Activated CD8-positive, alpha-beta T cell treated with anti-CD3 and anti-CD28 coated beads for 36 hours (primary cell): ENCODE measurements at regions of chr11 and their contacts with region 1.

Region 1: DNA sequence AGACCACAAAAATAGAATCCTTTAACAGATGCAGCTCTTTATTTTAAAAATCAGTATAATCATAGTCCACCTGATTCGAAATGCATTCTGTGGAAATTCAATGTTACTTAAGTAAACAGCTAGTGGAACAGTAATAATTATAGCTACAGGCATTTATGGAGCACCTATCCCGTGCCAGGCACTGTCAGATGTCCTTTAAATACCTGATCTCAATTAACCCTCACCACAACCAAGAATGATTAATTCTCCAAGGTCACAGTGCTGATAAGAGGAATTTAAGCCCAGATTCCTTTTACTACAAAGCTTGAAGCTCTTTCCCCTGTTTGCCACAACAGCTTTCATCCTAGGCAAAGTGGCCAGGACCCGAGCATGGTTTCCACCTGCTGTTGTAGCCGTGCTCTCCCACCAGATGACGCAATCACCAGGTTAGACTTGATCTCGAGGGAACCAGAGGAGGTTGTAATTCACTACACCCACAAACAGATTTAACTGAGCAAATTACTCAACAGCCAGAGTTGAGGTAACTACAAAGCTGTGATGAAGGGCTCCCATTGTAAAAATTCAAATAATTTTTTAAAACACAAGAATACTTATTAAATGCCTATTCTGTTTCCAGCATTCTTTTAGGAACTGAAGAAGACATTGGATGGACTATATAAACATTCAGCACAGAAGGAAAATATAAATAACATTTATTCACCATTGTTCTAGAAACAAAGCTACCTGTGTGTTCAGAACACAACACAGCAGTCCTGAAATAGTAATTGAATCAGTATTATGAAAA is 10.3 kb downstream of the PRDM10 start:
- DNase-seq: peak; percentile 71
- ATAC-seq: peak; percentile 95
- H3K4me3 Mint-ChIP-seq: no peak overlapping the region
- H3K27ac Mint-ChIP-seq: no peak overlapping the region
- H3K4me1 Mint-ChIP-seq: peaks cover 11% of the 10 kb centered on the region
- H3K27me3 Mint-ChIP-seq: no peaks in the 10 kb centered on the region
- CTCF ChIP-seq: peak; percentile 34

Region 2: GRCh38 chr11:129865701-129866100 is 126.7 kb before region 1 on chr11:
- CTCF ChIA-PET with region 1: no interaction called
- POLR2A ChIA-PET with region 1: no interaction called
- intact Hi-C with region 1: no loop called
- DNase-seq: peak; percentile 45
- ATAC-seq: peak; percentile 79
- H3K4me3 Mint-ChIP-seq: no peak overlapping the region
- H3K27ac Mint-ChIP-seq: no peak overlapping the region
- H3K4me1 Mint-ChIP-seq: peaks cover 26% of the 10 kb centered on the region
- H3K27me3 Mint-ChIP-seq: no peaks in the 10 kb centered on the region
- CTCF ChIP-seq: no peak

Region 3: GRCh38 chr11:129922674-129923073 is 69.7 kb before region 1 on chr11:
- CTCF ChIA-PET with region 1: interaction called, 6 read pairs
- POLR2A ChIA-PET with region 1: no interaction called
- intact Hi-C with region 1: loop called (anchors 5 kb)
- DNase-seq: no peak
- ATAC-seq: no peak
- H3K4me3 Mint-ChIP-seq: no peak overlapping the region
- H3K27ac Mint-ChIP-seq: no peak overlapping the region
- H3K4me1 Mint-ChIP-seq: peaks cover 6% of the 10 kb centered on the region
- H3K27me3 Mint-ChIP-seq: no peaks in the 10 kb centered on the region
- CTCF ChIP-seq: no peak

Region 4: DNA sequence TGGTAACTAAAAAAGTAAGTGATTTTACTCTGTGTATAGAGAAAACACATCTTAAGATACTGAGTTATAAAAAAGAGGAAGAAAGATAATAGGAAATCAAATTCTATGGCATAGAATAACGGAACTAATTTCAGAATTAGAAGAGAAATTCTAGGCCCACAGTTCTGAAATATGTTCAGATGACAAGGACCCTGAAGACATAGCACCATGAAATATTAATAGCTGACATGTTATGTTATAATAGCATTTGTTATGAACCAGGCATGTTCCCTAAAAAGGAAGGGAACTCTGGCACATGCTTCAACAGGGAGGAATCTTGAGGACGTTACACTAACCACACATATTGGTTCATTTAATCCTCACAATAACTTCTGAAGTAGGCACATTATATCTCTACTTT is 22.4 kb before region 1 on chr11:
- CTCF ChIA-PET with region 1: no interaction called
- POLR2A ChIA-PET with region 1: no interaction called
- intact Hi-C with region 1: no loop called
- DNase-seq: no peak
- ATAC-seq: no peak
- H3K4me3 Mint-ChIP-seq: no peak overlapping the region
- H3K27ac Mint-ChIP-seq: no peak overlapping the region
- H3K4me1 Mint-ChIP-seq: peaks cover 10% of the 10 kb centered on the region
- H3K27me3 Mint-ChIP-seq: no peaks in the 10 kb centered on the region
- CTCF ChIP-seq: no peak

Region 5: DNA sequence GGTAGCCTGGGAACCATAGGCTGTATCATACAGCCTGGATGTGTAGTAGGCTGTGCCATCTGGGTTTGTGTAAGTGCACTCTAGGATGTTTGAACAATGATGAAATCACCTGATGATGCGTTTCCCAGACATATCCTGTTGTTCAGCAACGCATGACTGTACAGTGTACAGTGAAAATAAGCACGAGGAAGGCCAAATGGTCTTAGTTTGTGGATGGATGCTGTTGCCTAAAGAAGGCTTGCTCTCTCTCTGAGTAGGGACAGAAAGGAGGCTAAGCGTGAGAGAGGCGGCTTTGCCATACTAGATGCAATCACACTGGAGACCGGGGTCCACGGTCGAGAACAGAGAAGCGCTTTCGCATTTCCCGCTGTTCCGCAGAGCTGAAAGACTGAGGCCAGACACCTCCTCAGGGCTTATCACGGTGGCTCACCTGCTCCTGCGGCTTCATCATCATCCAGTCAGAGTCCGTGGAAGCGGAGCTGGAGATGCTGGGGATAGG is 49.8 kb after region 1 on chr11:
- CTCF ChIA-PET with region 1: no interaction called
- POLR2A ChIA-PET with region 1: no interaction called
- intact Hi-C with region 1: no loop called
- DNase-seq: no peak
- ATAC-seq: no peak
- H3K4me3 Mint-ChIP-seq: no peak overlapping the region
- H3K27ac Mint-ChIP-seq: no peak overlapping the region
- H3K4me1 Mint-ChIP-seq: no peaks in the 10 kb centered on the region
- H3K27me3 Mint-ChIP-seq: peaks cover 5% of the 10 kb centered on the region
- CTCF ChIP-seq: no peak

Region 6: DNA sequence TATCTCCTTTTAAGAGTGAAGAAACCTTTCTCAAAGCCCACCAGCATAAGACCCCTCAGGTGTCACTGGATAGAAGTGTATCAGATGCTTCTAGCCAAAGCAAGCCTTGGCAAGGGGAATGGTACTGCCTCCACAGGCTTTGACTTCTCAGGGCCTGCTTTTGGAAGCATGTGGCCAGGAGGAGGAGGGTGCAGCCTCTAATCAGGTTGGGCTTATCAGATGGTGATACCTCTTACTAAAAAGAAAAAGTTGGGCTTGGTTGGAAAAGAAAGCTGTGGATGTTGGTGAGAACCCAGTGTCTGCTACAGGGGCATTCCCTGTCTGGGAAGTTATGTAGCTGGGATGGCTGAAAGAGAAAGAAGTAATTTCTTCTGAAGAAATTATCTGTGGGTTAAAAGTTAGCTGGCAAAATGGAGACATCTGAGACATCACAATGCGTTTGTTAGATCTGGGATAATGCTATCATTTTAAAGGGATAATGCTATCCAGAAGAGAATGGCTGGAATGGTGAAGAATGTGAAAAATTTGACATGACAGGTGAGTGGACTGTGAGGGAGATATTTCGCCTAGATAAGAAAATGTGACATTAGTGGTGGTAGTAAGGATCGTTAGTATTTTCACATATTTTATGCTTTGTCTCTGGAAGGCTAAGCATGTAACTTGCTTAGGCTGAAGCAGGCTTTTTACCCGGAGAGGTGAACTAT is 84.6 kb after region 1 on chr11:
- CTCF ChIA-PET with region 1: no interaction called
- POLR2A ChIA-PET with region 1: no interaction called
- intact Hi-C with region 1: no loop called
- DNase-seq: no peak
- ATAC-seq: no peak
- H3K4me3 Mint-ChIP-seq: no peak overlapping the region
- H3K27ac Mint-ChIP-seq: no peak overlapping the region
- H3K4me1 Mint-ChIP-seq: peaks cover 3% of the 10 kb centered on the region
- H3K27me3 Mint-ChIP-seq: no peaks in the 10 kb centered on the region
- CTCF ChIP-seq: no peak